ENCODE measurements at regions of chr20 and their contacts with region 1.

Region 1: GRCh38 chr20:62065669-62066338 is at the start of gene TAF4:
- DNase-seq: peak; percentile 67 to 80
- H3K4me3 ChIP-seq: peak within 1 kb of the TSS; percentile 54 to 62
- H3K27ac ChIP-seq: peak within 1 kb of the TSS; percentile 88
- H3K4me1 ChIP-seq: peaks cover 8 to 27% of the 10 kb centered on the region in 2 donors
- H3K27me3 ChIP-seq: no peaks in the 10 kb centered on the region
- CTCF ChIP-seq: no peak
- POLR2A ChIP-seq: peak; percentile 93 to 94
- total RNA-seq, gene TAF4: 6.2 to 37.6 (median 10.7) TPM

Region 2: GRCh38 chr20:62002882-62003480 is 62.8 kb before region 1 on chr20:
- intact Hi-C with region 1: no loop called
- DNase-seq: no peak
- H3K4me3 ChIP-seq: no peak overlapping the region
- H3K27ac ChIP-seq: no peak overlapping the region
- H3K4me1 ChIP-seq: no peaks in the 10 kb centered on the region
- H3K27me3 ChIP-seq: no peaks in the 10 kb centered on the region
- CTCF ChIP-seq: no peak
- POLR2A ChIP-seq: no peak

Region 3: DNA sequence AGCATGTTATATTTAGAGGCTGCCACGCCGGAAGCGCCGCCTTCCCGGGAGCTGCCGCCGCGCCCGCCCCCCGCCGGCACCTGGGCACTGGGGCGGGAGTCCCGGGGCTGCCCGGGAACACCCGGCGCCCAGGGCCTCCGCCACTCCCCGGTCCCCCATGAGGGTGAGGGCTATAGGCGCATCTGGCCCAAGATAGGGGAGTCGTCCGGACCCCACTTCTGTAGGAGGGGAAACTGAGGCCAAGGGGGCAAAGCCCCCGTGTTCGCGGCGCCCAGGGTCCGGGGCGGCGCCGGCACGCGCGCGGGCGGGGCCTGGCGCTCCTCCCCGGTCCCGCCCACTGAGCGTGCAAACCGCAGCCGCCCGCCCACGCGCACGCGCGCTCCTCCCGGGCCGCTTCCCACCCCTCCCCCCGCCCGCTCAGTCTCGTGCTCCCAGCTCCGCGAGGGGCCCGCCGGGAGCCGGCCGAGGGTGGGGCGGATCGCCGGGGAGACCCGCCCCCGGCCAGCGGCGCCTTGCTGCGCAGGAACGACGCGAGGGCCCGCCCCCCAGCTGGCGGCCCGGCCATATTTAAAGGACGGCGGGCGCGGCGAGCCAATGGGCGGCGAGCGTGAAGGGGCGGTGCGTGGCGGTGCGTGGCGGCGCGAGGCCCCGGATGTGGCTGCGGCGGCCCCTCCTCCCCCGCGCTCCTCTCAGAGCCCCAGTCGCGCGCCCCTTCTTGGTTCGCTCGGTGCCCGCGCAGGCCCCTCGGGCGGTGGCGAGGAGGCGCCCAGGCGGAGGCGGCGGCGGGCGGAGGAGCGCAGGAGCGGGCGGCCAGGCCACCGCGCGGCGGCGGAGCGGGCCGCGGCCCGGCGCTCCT is 56.2 kb after region 1 on chr20 and contains the start of gene LSM14B:
- intact Hi-C with region 1: loop called (anchors 10 kb)
- DNase-seq: peak; percentile 95 to 96
- H3K4me3 ChIP-seq: peak within 1 kb of the TSS; percentile 62 to 73
- H3K27ac ChIP-seq: peak within 1 kb of the TSS; percentile 96 to 97
- H3K4me1 ChIP-seq: peaks cover 5 to 11% of the 10 kb centered on the region in 2 donors
- H3K27me3 ChIP-seq: no peaks in the 10 kb centered on the region
- CTCF ChIP-seq: peak in 2 of 4 experiments; percentile 2 to 5
- POLR2A ChIP-seq: peak; percentile 22 to 60
- total RNA-seq, gene LSM14B: 3.1 to 56.8 (median 45.9) TPM

Region 4: DNA sequence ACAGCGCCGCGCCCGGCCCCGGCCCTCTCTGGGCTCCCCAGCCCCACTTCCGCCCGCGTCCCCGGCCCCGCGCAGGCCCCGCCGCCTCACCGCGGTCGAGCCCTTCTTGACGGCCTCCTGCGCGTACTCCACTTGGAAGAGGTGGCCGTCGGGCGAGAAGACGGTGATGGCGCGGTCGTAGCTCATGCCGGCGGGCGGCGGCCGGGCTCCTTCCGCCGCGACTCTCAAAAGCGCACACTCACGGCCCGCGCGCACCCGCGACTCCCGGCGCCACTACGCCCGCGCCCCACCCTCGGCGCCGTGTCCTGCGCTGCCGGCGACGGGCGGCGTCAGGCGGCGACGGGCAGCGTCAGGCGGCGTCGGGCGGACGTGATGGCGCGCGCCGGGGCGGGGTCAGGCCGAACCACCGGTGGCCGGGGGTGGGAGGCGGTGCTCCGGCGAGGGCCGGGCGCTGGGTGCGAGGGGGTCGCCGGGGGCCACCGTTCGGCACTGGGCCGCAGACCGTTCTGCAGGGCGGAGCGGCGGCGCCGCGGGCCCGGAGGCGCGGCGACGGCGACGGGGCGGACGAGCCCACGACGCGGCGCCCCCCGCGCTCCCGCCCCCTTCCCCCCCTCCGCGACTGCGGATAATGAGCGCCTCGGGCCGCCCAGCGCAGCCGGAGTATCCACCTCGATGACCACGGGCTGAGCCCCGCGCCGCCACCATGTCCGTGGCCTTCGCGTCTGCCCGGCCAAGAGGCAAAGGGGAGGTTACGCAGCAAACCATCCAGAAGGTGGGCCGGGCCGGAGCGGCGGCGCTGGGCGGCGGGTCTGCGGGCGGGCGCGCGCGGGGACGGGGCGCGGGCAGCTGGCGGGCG is 77.5 kb after region 1 on chr20 and contains the starts of genes PSMA7 and SS18L1:
- intact Hi-C with region 1: no loop called
- DNase-seq: peak; percentile 78 to 83
- H3K4me3 ChIP-seq: peak within 1 kb of the TSS; percentile 44 to 90
- H3K27ac ChIP-seq: peak within 1 kb of the TSS; percentile 94 to 99
- H3K4me1 ChIP-seq: peaks cover 0 to 21% of the 10 kb centered on the region in 2 donors
- H3K27me3 ChIP-seq: no peaks in the 10 kb centered on the region
- CTCF ChIP-seq: peak in 2 of 4 experiments; percentile 2 to 9
- POLR2A ChIP-seq: peak; percentile 86 to 94
- total RNA-seq, gene PSMA7: 145 to 214 (median 162) TPM
- total RNA-seq, gene SS18L1: 0.51 to 21.7 (median 12.8) TPM

Measured in uterus (tissue), 4 donors.